Aorta (tissue), 5 donors: ENCODE measurements at regions of chr14 and their contacts with region 1.

Region 1: DNA sequence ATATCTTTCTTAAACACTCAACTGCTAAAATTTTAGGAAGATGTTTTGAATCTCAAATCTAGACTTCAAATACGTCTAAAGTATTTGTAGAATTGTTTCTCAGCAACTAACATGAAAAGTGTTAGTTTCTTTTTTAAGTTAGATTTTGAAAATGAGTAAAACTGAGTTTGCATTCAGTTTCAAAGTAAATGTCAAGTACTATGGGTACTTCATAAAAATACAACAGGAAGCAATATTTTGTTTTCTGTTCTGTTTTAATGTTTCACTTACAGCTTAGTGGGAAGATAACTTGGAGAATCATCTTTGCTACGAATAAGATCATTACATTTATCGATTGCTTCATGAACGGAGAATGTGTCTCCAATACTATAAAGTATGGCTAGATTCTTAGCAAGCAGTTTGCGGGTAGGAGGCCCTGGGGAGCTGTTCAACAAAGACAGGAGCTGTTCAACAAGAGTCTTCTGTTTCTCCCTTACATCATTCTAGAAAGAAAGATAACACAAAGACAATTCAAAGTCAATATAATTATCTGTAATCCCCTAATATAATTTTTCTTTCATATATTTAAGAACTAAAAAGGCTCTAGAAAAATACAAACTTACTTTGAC is 20.2 kb downstream of the HEATR5A start:
- DNase-seq: no peak
- ATAC-seq: no peak
- H3K4me3 ChIP-seq: no peak overlapping the region
- H3K27ac ChIP-seq: no peak overlapping the region
- H3K4me1 ChIP-seq: peaks cover 0 to 1% of the 10 kb centered on the region in 2 donors
- H3K27me3 ChIP-seq: no peaks in the 10 kb centered on the region

Region 2: DNA sequence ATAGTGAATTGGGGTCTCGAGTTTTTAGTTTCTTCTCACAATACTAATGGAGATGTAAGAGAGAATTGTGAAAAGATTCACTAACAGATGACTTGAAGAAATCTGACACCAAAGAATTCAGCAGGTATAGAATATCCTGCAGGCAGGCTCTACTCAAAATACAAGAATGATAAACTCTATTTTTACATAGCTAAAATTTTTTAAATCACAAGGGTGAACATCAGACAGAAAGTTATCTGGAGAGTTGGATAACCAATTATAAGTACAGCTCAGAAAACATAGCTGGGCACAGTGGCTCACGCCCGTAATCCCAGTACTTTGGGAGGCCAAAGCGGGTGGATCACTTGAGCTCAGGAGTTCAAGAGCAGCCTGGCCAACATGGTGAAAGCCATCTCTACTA is 394.6 kb before region 1 on chr14:
- intact Hi-C with region 1: no loop called
- DNase-seq: no peak
- ATAC-seq: no peak
- H3K4me3 ChIP-seq: no peak overlapping the region
- H3K27ac ChIP-seq: no peak overlapping the region
- H3K4me1 ChIP-seq: peaks cover 0 to 3% of the 10 kb centered on the region in 2 donors
- H3K27me3 ChIP-seq: no peaks in the 10 kb centered on the region

Region 3: GRCh38 chr14:31388687-31389413 is 11.3 kb before region 1 on chr14:
- intact Hi-C with region 1: no loop called
- DNase-seq: no peak
- ATAC-seq: peak; percentile 69
- H3K4me3 ChIP-seq: no peak overlapping the region
- H3K27ac ChIP-seq: no peak overlapping the region
- H3K4me1 ChIP-seq: no peaks in the 10 kb centered on the region
- H3K27me3 ChIP-seq: no peaks in the 10 kb centered on the region

Region 4: DNA sequence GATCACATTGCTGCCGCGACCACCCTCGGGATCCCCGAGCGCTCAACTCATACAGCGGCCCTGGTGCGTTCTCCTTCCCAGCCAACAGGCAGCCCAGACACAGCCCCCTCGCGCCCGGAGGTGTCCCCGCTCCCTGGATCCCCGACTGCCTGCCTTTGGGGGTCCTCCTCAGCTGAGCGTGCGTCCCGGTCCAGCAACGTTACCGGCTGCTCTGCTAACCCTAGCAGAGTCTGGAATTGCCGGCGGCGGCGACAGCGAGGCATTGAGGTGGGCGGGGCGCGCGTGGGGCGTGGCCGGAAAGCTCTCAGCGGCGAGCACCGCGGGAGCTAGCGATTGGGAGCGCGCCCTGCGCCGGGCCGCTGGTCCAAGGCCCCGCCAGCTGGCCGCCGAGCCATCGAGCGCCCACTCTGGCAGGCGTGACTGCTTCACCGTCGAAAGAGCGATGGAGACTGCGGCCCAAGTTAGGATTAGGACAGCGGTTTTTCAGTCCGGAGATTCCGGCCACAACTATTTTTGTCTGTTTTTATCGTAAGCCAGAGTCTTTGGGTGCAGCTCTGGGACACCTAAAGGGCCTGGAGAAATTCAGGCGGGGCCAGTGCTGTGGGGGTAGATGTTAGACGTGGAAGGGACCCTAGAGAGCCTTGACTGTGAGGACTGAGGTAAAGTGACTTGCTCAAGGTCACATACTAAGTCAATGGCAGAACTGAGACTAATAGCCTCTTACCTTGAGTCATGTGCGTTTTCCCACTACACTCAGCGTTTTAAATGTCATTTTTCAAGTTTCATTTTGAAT is 20.4 kb after region 1 on chr14 and contains the start of gene HEATR5A:
- intact Hi-C with region 1: no loop called
- DNase-seq: peak; percentile 97 to 99
- ATAC-seq: peak; percentile 99
- H3K4me3 ChIP-seq: peak within 1 kb of the TSS; percentile 82 to 91
- H3K27ac ChIP-seq: peak within 1 kb of the TSS; percentile 19 to 66
- H3K4me1 ChIP-seq: no peaks in the 10 kb centered on the region
- H3K27me3 ChIP-seq: no peaks in the 10 kb centered on the region
- total RNA-seq, gene HEATR5A: 41.3 to 53.0 TPM

Region 5: DNA sequence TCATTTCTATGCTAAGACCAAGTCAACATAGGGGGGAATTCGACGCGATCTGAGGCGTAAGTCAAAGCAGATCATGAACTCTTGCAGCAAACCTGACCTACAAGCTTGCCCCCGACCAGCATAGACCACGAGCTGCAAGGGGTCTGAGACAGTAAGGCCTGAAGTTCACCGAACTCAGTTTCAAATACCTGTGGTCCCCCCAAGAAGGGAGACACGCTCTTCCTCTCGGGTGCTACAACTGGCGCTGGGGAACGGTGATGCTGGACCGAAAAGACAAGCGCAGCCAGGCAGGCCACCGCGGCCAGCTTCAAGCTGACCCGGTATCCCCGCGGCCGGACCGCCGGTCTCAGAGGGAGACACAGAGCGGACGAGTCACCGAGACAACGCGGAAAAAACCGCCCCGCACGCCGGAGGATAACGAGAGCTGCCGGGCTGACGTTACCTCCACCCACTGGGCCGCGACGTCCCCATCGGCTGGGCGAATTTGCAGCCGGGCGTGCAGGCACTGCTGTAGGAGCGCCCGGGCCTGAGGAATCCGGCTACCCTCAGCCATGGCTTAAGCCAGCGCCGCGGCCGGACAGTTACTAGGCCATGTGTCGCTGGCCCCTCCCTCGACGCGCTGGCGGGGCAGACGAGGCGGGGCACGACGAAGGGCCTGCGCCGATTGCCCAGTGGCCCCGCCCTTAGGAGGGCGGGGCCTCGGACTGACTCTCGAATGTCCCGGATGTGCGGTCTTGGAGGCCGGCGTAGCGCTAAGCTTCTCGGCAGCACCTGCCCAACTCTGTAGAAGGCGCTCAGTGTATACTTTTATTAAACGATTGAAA is 56.9 kb after region 1 on chr14 and contains the start of gene DTD2:
- intact Hi-C with region 1: loop called in 1 of 2 experiments (anchors 10 kb)
- DNase-seq: peak; percentile 96 to 97
- ATAC-seq: peak; percentile 100
- H3K4me3 ChIP-seq: peak within 1 kb of the TSS; percentile 45 to 50
- H3K27ac ChIP-seq: peak within 1 kb of the TSS; percentile 7 to 48
- H3K4me1 ChIP-seq: no peaks in the 10 kb centered on the region
- H3K27me3 ChIP-seq: no peaks in the 10 kb centered on the region
- total RNA-seq, gene DTD2: 12.4 to 15.5 TPM